Heart left ventricle (tissue), 16 donors: ENCODE measurements at regions of chr4 and their contacts with region 1.

Region 1: GRCh38 chr4:44629280-44629866 is 22.1 kb downstream of the YIPF7 start:
- DNase-seq: no peak
- ATAC-seq: peak in 2 of 4 donors; percentile 58 to 62
- H3K4me3 ChIP-seq: no peak overlapping the region
- H3K27ac ChIP-seq: no peak overlapping the region
- H3K4me1 ChIP-seq: no peaks in the 10 kb centered on the region
- H3K27me3 ChIP-seq: no peaks in the 10 kb centered on the region
- CTCF ChIP-seq: peak; percentile 48 to 75 (median 66)
- POLR2A ChIP-seq: no peak

Region 2: GRCh38 chr4:43132010-43132582 is 1497.3 kb before region 1 on chr4:
- intact Hi-C with region 1: loop called in 7 of 10 experiments (anchors 5 to 10 kb)
- DNase-seq: peak in 2 of 5 donors; percentile 14 to 33
- ATAC-seq: no peak
- H3K4me3 ChIP-seq: no peak overlapping the region
- H3K27ac ChIP-seq: no peak overlapping the region
- H3K4me1 ChIP-seq: no peaks in the 10 kb centered on the region
- H3K27me3 ChIP-seq: no peaks in the 10 kb centered on the region
- CTCF ChIP-seq: peak; percentile 28 to 73 (median 58)
- POLR2A ChIP-seq: no peak

Region 3: DNA sequence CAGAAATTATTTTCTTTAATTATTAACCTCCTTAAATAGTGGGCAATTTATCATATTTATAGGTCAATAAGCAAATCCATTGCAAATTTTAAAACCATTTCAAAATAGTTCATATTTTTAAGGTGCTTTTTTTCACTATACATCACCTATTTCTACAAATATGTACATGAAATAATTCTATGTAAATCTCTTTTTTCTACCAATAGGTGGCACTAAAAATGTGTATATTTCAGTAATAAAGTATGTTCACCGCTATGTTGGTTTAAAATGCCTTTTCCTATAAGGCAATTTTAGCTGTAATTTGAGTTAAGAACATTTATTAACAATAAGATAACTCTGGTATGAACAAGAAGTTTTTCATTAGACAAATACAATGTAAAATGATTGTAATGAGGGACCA is 853.0 kb before region 1 on chr4:
- intact Hi-C with region 1: loop called in 2 of 10 experiments (anchors 10 kb)
- DNase-seq: no peak
- ATAC-seq: no peak
- H3K4me3 ChIP-seq: no peak overlapping the region
- H3K27ac ChIP-seq: no peak overlapping the region
- H3K4me1 ChIP-seq: no peaks in the 10 kb centered on the region
- H3K27me3 ChIP-seq: no peaks in the 10 kb centered on the region
- CTCF ChIP-seq: peak in 5 of 12 donors; percentile 7 to 35 (median 15)
- POLR2A ChIP-seq: no peak

Region 4: GRCh38 chr4:44448548-44449461 is 180.6 kb before region 1 on chr4 and contains the start of gene KCTD8:
- intact Hi-C with region 1: loop called in 1 of 10 experiments (anchors 10 kb)
- DNase-seq: peak; percentile 71 to 90 (median 85)
- ATAC-seq: peak; percentile 74 to 95 (median 95)
- H3K4me3 ChIP-seq: peak within 1 kb of the TSS; percentile 22 to 61 (median 50)
- H3K27ac ChIP-seq: peak within 1 kb of the TSS in 8 of 12 donors; percentile 14 to 86 (median 49)
- H3K4me1 ChIP-seq: peaks cover 0 to 32% (median 6%) of the 10 kb centered on the region in 12 donors
- H3K27me3 ChIP-seq: peaks cover 13 to 78% (median 40%) of the 10 kb centered on the region in 9 donors
- CTCF ChIP-seq: peak; percentile 39 to 79 (median 62)
- POLR2A ChIP-seq: no peak
- total RNA-seq, gene KCTD8: 0.15 to 2.9 (median 0.17) TPM in 3 of 9 donors, not detected in the others

Region 5: DNA sequence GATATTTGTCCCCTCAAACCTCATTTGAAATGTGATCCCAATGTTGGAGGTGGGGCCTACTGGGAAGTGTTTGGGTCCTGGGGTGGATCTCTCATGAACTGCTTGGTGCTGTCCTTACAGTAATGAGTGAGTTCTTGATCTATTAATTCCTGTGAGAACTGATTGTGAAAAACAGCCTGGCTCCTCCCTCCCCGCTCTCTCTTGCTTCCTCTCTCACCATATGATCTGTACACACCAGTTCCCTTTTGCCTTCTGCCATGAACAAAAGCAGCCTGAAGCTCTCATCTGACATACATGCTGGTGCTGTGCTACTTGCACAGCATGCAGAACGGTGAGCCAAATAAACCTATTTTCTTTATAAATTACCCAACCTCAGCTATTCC is 33.2 kb after region 1 on chr4:
- intact Hi-C with region 1: no loop called
- DNase-seq: no peak
- ATAC-seq: no peak
- H3K4me3 ChIP-seq: no peak overlapping the region
- H3K27ac ChIP-seq: no peak overlapping the region
- H3K4me1 ChIP-seq: no peaks in the 10 kb centered on the region
- H3K27me3 ChIP-seq: no peaks in the 10 kb centered on the region
- CTCF ChIP-seq: no peak
- POLR2A ChIP-seq: no peak